CD14-positive monocyte (primary cell): ENCODE measurements at regions of chr1 and their contacts with region 1.

Region 1: DNA sequence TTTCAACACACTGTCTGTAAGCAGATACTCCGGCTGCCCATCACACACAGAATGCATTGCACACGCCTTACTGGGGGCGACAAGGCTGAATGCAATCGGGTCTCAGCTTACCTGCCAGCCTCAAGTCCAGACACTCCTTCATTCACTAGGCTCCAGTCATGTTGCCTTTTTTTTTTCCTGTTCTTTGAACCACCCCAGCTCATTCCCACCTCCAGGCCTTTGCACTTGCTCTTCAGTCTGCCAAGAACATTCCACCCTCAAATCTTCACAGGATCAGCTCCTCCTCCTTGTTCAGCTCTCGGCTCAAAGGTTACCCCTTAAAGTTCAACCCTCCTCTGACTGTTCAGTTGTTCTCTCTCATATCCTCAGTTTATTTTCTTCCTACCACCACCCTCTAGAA is 181.9 kb upstream of the ESRRG start:
- DNase-seq: no peak
- H3K4me3 ChIP-seq: no peak overlapping the region
- H3K4me3 Mint-ChIP-seq: no peak overlapping the region
- H3K27ac ChIP-seq: no peak overlapping the region
- H3K27ac Mint-ChIP-seq: no peak overlapping the region
- H3K4me1 ChIP-seq: no peaks in the 10 kb centered on the region
- H3K4me1 Mint-ChIP-seq: no peaks in the 10 kb centered on the region
- H3K27me3 ChIP-seq: no peaks in the 10 kb centered on the region
- H3K27me3 Mint-ChIP-seq: peaks cover 0 to 2% (median 0%) of the 10 kb centered on the region in 3 donors
- CTCF ChIP-seq: no peak

Region 2: GRCh38 chr1:216958569-216958968 is 53.4 kb after region 1 on chr1:
- intact Hi-C with region 1: loop called in 1 of 2 experiments (anchors 5 kb)
- DNase-seq: no peak
- H3K4me3 ChIP-seq: no peak overlapping the region
- H3K4me3 Mint-ChIP-seq: no peak overlapping the region
- H3K27ac ChIP-seq: no peak overlapping the region
- H3K27ac Mint-ChIP-seq: no peak overlapping the region
- H3K4me1 ChIP-seq: no peaks in the 10 kb centered on the region
- H3K4me1 Mint-ChIP-seq: no peaks in the 10 kb centered on the region
- H3K27me3 ChIP-seq: no peaks in the 10 kb centered on the region
- H3K27me3 Mint-ChIP-seq: no peaks in the 10 kb centered on the region
- CTCF ChIP-seq: no peak